ENCODE measurements at regions of chr6 and their contacts with region 1.

Region 1: DNA sequence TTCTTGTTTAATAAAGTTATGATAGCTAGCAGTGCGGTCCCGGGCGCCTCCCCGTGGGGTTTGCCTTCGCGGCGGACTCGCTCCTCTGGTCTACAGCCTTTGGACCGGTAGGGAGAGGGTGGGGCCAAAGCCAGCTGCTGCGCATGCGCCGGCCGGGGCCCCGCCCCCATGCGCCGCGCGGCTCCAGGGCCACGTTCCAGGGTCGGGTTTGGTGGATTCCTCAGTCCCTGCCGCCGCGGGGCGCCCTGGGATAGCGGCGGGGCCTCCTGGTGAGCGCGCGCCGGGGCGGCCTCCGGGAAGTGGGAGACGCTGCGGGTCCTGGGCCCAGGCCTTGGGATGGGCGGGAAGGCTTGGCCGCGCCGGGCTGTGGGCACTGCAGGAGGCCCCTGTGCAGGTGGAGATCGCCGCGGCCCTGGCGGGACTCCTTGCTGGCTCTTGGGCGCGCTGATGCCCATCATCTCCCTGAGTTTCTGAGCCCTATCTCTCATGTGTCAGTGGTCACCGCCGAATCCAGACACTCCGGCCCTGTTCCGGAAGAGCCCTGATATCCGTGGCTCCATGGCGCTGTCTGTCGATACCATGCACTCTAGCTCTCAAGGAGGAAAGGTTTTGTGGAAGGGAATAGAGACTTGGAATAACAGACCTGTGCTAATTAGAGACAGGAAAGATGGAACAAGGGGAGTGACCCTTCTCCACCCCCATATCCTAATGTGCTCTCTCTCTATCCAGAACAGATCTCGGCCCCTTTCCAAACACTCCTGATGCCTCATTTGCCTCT is at the start of gene VARS2:
- DNase-seq: peak; percentile 61 to 97
- H3K4me3 ChIP-seq: peak within 1 kb of the TSS; percentile 41 to 74 (median 66)
- H3K27ac ChIP-seq: no peak within 1 kb of the TSS
- H3K4me1 ChIP-seq: peaks cover 0 to 14% (median 6%) of the 10 kb centered on the region in 4 experiments; a peak in 5 of 7 replicates
- H3K27me3 ChIP-seq: no peaks in the 10 kb centered on the region
- CTCF ChIP-seq: no peak
- EP300 ChIP-seq: no peak
- POLR2A ChIP-seq: peak in 1 of 2 experiments; percentile 74; a peak in 2 of 3 replicates
- RAD21 ChIP-seq: 0 out of 4 replicates have a peak, but pooled peaks of 1 of the 2 experiments have one; percentile 8
- total RNA-seq, gene VARS2: 41.2 and 47.7 TPM in 2 replicates

Region 2: DNA sequence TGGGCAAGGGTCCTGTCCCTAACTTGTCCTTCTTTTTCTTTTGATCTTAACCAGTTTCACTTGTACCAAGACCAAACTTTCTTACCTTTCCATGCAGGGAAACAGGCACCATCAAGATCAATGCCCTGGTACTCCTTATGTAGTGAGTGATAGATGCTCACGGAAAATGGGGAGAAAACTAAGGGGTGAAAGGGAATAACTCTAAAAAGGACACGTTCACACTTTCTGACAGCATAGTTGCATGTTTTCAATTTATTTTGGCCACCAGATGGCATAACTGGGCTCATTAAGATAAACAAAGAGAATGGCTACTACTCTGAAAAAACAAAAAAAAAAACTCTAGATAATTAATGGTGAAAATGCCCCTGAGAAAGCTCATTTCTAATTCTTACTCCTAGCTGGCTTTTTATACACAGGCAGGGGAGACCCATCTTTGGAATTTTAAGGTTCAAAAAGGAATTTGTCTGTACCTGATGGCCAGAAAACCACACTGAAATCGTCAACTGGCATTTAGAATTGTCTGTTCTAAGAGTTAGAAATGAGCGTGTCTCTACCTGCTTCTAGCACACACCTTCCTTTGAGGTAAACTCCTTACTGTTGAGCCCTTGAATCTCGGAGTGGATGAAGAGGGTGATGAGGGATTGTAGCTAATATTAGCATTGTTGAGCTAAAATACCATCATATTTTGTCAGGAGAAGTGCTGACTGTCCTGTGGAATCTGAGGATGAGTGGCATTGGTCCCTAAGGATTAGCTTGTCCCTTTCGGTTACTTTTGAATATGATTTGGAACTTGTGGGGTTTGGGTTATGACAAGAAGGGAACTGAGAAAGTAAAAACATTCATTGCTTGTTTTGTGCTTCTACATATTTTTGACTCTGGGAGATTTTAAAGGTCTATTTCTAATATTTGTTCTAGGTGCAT is 92.1 kb before region 1 on chr6:
- CTCF ChIA-PET with region 1: interaction called, 98 read pairs
- POLR2A ChIA-PET with region 1: interaction called, 3 read pairs
- DNase-seq: no peak
- H3K4me3 ChIP-seq: no peak overlapping the region
- H3K27ac ChIP-seq: no peak overlapping the region
- H3K4me1 ChIP-seq: peaks cover 0 to 3% (median 0%) of the 10 kb centered on the region in 4 experiments; a peak in 1 of 7 replicates
- H3K27me3 ChIP-seq: no peaks in the 10 kb centered on the region
- CTCF ChIP-seq: peak in 2 of 3 experiments; percentile 28 to 30; a peak in 2 of 4 replicates
- EP300 ChIP-seq: no peak
- POLR2A ChIP-seq: no peak
- RAD21 ChIP-seq: peak; percentile 27 to 42; a peak in 3 of 4 replicates

Region 3: DNA sequence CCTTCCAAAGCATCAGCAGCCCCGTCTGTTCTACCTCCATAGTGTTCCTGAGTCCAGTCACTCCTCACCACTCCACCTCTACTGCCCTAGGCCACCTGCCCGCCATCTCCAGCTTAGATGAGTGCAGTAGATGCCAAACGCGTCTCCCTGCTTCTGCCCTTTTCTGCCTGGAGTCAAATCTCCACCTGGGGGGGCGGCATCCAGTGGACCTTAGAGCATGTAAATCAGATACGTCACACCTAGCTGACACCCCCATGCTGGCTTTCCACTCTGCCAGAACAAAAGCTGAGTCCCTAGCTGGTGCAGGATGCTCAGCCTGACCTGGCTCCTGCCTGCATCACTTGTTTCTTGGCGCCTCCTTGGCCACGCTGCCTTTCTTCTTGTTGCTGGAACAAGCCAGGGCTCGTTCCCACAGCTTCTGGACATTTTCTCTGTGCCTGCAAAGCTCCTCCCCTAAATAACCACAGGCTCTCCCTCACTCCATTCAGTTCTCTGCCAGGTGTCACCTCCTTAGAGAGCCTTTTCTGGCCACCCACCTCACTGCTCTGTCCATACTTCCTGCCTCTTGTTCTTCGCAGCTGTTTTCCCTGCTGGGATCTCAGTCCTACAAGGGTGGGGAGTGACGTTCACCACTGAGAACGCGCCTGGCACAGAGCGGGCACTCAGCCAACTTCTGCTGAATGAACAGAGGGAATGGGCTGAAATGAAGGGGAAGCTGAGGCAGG is 24.2 kb before region 1 on chr6:
- CTCF ChIA-PET with region 1: interaction called, 35 read pairs
- POLR2A ChIA-PET with region 1: interaction called, 9 read pairs
- DNase-seq: no peak
- H3K4me3 ChIP-seq: no peak overlapping the region
- H3K27ac ChIP-seq: 0 out of 2 replicates have a peak overlapping the region, but pooled peaks have one; percentile 16
- H3K4me1 ChIP-seq: peaks cover 6 to 23% (median 18%) of the 10 kb centered on the region in 4 experiments
- H3K27me3 ChIP-seq: no peaks in the 10 kb centered on the region
- CTCF ChIP-seq: no peak
- EP300 ChIP-seq: no peak
- POLR2A ChIP-seq: no peak
- RAD21 ChIP-seq: no peak

Region 4: DNA sequence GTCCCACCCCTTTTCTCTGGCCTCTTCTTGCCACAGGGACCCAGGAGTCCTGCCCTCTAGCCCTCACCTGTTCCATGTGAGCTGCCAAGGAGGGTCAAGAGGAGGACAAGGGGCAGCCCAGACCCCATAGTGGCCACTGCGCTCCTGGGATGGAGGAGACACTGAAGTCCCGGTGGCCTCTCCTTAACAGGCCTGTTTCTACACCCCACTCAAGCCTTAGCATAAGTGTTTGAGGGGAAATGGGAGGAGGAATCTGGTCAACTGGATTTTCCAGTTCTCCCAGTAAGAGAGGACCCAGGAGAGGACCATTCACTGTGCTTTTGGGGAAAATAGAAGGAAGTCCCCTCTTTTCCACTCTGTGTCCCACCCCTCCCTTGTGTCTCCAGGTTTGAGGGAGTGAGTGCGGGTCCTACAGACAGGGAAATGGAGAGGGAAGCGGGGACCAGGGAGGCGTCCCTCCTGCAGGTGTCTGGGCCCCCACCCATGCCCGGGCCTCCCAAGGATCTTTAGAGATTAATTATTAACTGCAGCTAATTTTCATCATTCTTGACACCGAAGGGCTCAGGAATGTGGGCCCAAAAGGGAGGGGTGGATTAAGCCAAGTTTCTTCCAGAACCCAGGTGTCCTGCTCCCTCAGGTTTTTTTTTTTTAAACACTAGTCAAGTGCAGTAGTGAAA is 17.8 kb after region 1 on chr6 and contains the start of gene SFTA2:
- CTCF ChIA-PET with region 1: interaction called, 52 read pairs
- POLR2A ChIA-PET with region 1: interaction called, 22 read pairs
- DNase-seq: no peak
- H3K4me3 ChIP-seq: no peak within 1 kb of the TSS
- H3K27ac ChIP-seq: no peak within 1 kb of the TSS
- H3K4me1 ChIP-seq: 0 out of 7 replicates have a peak, but pooled peaks cover 0 to 3% (median 0%) of the 10 kb centered on the region in 4 experiments
- H3K27me3 ChIP-seq: no peaks in the 10 kb centered on the region
- CTCF ChIP-seq: no peak
- EP300 ChIP-seq: no peak
- POLR2A ChIP-seq: no peak
- RAD21 ChIP-seq: no peak
- total RNA-seq, gene SFTA2: not detected in 2 replicates

Region 5: DNA sequence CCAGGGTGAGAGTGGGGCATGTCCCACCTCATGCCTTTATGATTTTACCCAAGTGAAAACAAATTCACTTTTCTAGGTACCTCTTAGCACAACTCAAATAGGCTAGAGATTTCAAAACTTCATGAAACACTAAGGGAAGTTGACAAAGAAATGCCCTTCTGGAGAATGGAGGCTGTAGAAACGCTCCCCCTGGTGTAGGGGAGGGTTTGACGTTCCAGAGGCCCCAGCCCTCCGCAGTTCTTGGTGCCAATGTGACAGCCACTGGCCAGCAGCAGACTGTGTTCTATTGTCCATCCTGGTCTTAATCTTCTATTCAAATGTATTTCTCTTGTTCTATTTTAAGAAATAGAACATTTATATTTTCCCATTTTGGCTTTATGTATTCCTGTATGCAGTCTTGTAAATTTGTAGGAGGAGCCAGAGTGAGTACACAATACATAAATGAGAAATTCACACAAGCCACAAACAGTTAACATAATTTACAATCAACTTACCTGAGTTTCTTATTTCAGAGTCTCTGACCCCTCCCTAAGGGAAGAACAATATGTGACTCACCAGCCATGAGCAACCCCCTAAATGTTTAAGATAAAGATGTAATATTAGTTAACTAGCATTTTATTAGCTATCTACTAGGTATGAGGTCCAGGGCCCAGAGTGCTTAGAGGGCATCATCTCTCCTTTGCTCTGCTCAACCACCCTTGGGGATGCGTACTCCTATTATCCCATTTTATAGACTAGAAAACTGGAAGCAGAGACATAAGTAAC is 60.4 kb after region 1 on chr6:
- CTCF ChIA-PET with region 1: interaction called, 18 read pairs
- POLR2A ChIA-PET with region 1: interaction called, 3 read pairs
- DNase-seq: no peak
- H3K4me3 ChIP-seq: no peak overlapping the region
- H3K27ac ChIP-seq: no peak overlapping the region
- H3K4me1 ChIP-seq: peaks cover 0 to 4% (median 0%) of the 10 kb centered on the region in 4 experiments; a peak in 1 of 7 replicates
- H3K27me3 ChIP-seq: no peaks in the 10 kb centered on the region
- CTCF ChIP-seq: peak; percentile 19 to 22 (median 19); a peak in 2 of 4 replicates
- EP300 ChIP-seq: no peak
- POLR2A ChIP-seq: no peak
- RAD21 ChIP-seq: no peak; a peak in 1 of 4 replicates

Region 6: GRCh38 chr6:31058128-31058894 is 144.0 kb after region 1 on chr6:
- CTCF ChIA-PET with region 1: interaction called, 21 read pairs
- POLR2A ChIA-PET with region 1: interaction called, 3 read pairs
- DNase-seq: no peak
- H3K4me3 ChIP-seq: no peak overlapping the region
- H3K27ac ChIP-seq: no peak overlapping the region
- H3K4me1 ChIP-seq: no peaks in the 10 kb centered on the region; a peak in 1 of 7 replicates
- H3K27me3 ChIP-seq: no peaks in the 10 kb centered on the region
- CTCF ChIP-seq: peak in 2 of 3 experiments; percentile 14 to 57; a peak in 2 of 4 replicates
- EP300 ChIP-seq: no peak
- POLR2A ChIP-seq: no peak
- RAD21 ChIP-seq: peak in 1 of 2 experiments; percentile 11; a peak in 1 of 4 replicates

Region 7: GRCh38 chr6:31094389-31094881 is 180.2 kb after region 1 on chr6:
- CTCF ChIA-PET with region 1: interaction called, 285 read pairs
- POLR2A ChIA-PET with region 1: no interaction called
- DNase-seq: no peak
- H3K4me3 ChIP-seq: no peak overlapping the region
- H3K27ac ChIP-seq: no peak overlapping the region
- H3K4me1 ChIP-seq: peaks cover 0 to 3% (median 0%) of the 10 kb centered on the region in 4 experiments; a peak in 3 of 7 replicates
- H3K27me3 ChIP-seq: no peaks in the 10 kb centered on the region
- CTCF ChIP-seq: no peak
- EP300 ChIP-seq: no peak
- POLR2A ChIP-seq: no peak
- RAD21 ChIP-seq: no peak